ENCODE measurements at regions of chr7 and their contacts with region 1.

Region 1: DNA sequence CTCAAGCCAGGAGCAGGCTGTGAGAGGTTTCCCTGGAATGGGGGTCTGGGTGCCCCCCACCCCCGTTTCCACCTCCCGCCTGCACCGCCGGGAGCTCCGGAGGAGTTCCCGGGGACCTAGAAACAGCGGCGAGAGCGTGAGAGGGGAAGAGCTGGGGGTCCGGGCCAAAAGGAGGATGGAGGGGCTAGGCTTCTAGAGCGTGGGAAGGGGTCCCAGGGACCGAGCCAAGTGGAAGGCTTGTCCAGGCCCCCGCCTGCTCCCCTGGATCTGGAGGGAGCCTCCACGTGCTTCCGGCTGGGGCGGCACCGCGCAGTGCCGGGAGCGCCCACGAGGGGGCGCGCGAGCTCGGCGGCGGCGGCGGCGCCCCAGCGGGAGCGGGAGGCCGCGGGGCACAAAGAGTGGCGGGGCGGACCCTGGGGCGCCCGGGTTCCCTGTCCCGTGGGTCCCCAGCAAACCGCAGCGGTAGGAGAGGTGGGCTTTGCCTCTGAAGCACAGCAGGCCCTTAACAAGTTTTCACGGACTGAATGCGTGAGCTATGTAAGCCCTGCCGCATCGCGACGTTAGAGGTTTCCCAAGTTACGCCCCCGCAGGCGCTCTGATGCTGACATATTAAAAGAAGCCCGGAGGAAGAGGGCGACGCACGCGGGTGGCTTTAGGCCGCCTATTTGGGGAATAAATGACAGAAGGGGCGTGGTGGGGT is 104.4 kb upstream of the LRRC4 start:
- DNase-seq: peak in 4 of 5 donors; percentile 50 to 73 (median 60)
- H3K4me3 ChIP-seq: peak overlapping the region; percentile 11 to 66
- H3K4me3 Mint-ChIP-seq: peak overlapping the region; percentile 78 to 88 (median 82)
- H3K27ac ChIP-seq: no peak overlapping the region
- H3K27ac Mint-ChIP-seq: peak overlapping the region in 3 of 7 donors; percentile 35 to 53 (median 36)
- H3K4me1 ChIP-seq: peaks cover 16% of the 10 kb centered on the region
- H3K4me1 Mint-ChIP-seq: peaks cover 8 to 21% (median 13%) of the 10 kb centered on the region in 4 donors
- H3K27me3 ChIP-seq: peaks cover 23% of the 10 kb centered on the region
- H3K27me3 Mint-ChIP-seq: peaks cover 23 to 31% of the 10 kb centered on the region in 2 donors

Region 2: DNA sequence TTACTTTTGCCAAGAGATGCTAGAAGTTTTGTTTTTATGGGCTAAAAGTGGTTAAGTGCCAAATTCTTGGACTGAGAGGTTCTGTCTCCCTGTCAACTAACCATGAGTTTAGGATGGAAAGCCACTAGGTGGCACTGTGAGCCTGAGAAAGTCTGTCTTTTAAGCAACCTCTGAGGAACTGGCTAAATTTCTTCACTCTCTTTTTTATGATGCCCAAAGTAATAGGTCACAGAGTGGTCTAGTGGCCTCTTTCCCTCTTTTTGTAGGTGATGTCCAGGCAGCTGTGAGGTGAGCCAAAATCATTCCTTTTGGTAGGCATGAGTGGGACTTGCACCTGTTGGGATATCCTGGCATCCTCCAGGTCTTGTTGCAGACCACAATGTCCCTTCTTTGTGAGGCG is 426.9 kb before region 1 on chr7:
- CTCF ChIA-PET with region 1: interaction called, 30 read pairs
- POLR2A ChIA-PET with region 1: interaction called, 4 read pairs
- intact Hi-C with region 1: loop called (anchors 2 kb)
- DNase-seq: peak; percentile 61 to 71 (median 64)
- H3K4me3 ChIP-seq: no peak overlapping the region
- H3K4me3 Mint-ChIP-seq: no peak overlapping the region
- H3K27ac ChIP-seq: no peak overlapping the region
- H3K27ac Mint-ChIP-seq: no peak overlapping the region
- H3K4me1 ChIP-seq: no peaks in the 10 kb centered on the region
- H3K4me1 Mint-ChIP-seq: peaks cover 0 to 6% (median 2%) of the 10 kb centered on the region in 4 donors
- H3K27me3 ChIP-seq: no peaks in the 10 kb centered on the region
- H3K27me3 Mint-ChIP-seq: no peaks in the 10 kb centered on the region

Region 3: DNA sequence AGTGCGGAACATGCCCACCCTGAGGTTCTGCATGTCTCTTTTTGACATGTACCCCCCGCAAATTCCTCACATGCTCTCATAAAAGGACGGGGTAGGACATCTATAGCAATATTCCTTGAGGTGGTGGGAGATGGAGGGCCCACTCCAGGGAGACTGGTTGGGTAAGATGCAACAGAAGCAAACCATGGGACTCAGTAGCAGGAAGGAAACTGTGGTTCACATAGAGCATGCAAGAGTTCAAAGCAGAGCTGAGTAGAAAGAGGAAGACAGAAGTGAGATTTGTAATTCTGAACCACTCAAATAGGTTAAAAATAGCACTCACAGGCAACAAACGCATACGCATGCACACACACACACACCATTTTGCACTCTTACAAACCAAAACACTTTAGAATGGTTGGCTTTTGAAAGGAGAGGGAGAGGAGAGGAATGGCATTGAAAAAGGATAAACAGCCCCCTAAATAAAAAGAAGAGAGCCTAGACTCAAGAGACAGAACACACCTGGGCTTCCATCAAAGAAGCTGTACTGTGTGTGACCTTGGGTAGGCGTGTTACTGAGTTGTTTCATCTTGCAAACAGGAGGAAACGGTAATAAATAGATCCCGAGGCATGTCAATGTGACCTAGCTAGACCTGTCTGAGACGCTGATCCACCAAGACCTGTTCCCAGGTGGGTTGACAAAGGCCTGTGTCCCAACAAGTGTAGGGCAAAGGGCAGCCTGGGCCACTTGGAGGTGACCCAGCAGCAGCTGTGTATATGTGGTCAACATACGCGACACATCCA is 26.8 kb before region 1 on chr7:
- CTCF ChIA-PET with region 1: interaction called, 23 read pairs
- POLR2A ChIA-PET with region 1: interaction called, 5 read pairs
- intact Hi-C with region 1: no loop called
- DNase-seq: peak in 4 of 5 donors; percentile 53 to 69 (median 62)
- H3K4me3 ChIP-seq: peak overlapping the region; percentile 20 to 21
- H3K4me3 Mint-ChIP-seq: peak overlapping the region; percentile 71 to 93 (median 84)
- H3K27ac ChIP-seq: peak overlapping the region; percentile 10
- H3K27ac Mint-ChIP-seq: peak overlapping the region; percentile 72 to 96 (median 83)
- H3K4me1 ChIP-seq: peaks cover 65% of the 10 kb centered on the region
- H3K4me1 Mint-ChIP-seq: peaks cover 50 to 75% (median 63%) of the 10 kb centered on the region in 4 donors
- H3K27me3 ChIP-seq: no peaks in the 10 kb centered on the region
- H3K27me3 Mint-ChIP-seq: no peaks in the 10 kb centered on the region

Region 4: GRCh38 chr7:128121711-128122530 is 13.7 kb before region 1 on chr7:
- CTCF ChIA-PET with region 1: interaction called, 12 read pairs
- POLR2A ChIA-PET with region 1: interaction called, 4 read pairs
- intact Hi-C with region 1: no loop called
- DNase-seq: no peak
- H3K4me3 ChIP-seq: no peak overlapping the region
- H3K4me3 Mint-ChIP-seq: no peak overlapping the region
- H3K27ac ChIP-seq: no peak overlapping the region
- H3K27ac Mint-ChIP-seq: no peak overlapping the region
- H3K4me1 ChIP-seq: peaks cover 6% of the 10 kb centered on the region
- H3K4me1 Mint-ChIP-seq: peaks cover 8 to 11% (median 8%) of the 10 kb centered on the region in 4 donors
- H3K27me3 ChIP-seq: no peaks in the 10 kb centered on the region
- H3K27me3 Mint-ChIP-seq: no peaks in the 10 kb centered on the region

Region 5: GRCh38 chr7:128322040-128322643 is 186.5 kb after region 1 on chr7:
- CTCF ChIA-PET with region 1: interaction called, 13 read pairs
- POLR2A ChIA-PET with region 1: no interaction called
- intact Hi-C with region 1: no loop called
- DNase-seq: peak in 2 of 5 donors; percentile 10 to 20
- H3K4me3 ChIP-seq: no peak overlapping the region
- H3K4me3 Mint-ChIP-seq: peak overlapping the region in 3 of 8 donors; percentile 2 to 17 (median 8)
- H3K27ac ChIP-seq: no peak overlapping the region
- H3K27ac Mint-ChIP-seq: peak overlapping the region in 6 of 7 donors; percentile 0 to 65 (median 26)
- H3K4me1 ChIP-seq: peaks cover 17% of the 10 kb centered on the region
- H3K4me1 Mint-ChIP-seq: peaks cover 13 to 34% (median 23%) of the 10 kb centered on the region in 4 donors
- H3K27me3 ChIP-seq: no peaks in the 10 kb centered on the region
- H3K27me3 Mint-ChIP-seq: no peaks in the 10 kb centered on the region

Region 6: GRCh38 chr7:128405471-128406313 is 270.0 kb after region 1 on chr7:
- CTCF ChIA-PET with region 1: no interaction called
- POLR2A ChIA-PET with region 1: no interaction called
- intact Hi-C with region 1: no loop called
- DNase-seq: peak; percentile 54 to 63 (median 58)
- H3K4me3 ChIP-seq: peak overlapping the region; percentile 20 to 60
- H3K4me3 Mint-ChIP-seq: peak overlapping the region; percentile 83 to 89 (median 86)
- H3K27ac ChIP-seq: peak overlapping the region; percentile 55
- H3K27ac Mint-ChIP-seq: peak overlapping the region in 5 of 7 donors; percentile 42 to 86 (median 75)
- H3K4me1 ChIP-seq: peaks cover 59% of the 10 kb centered on the region
- H3K4me1 Mint-ChIP-seq: peaks cover 34 to 57% (median 49%) of the 10 kb centered on the region in 4 donors
- H3K27me3 ChIP-seq: no peaks in the 10 kb centered on the region
- H3K27me3 Mint-ChIP-seq: no peaks in the 10 kb centered on the region